ENCODE measurements at regions of chr18 and their contacts with region 1.

Region 1: DNA sequence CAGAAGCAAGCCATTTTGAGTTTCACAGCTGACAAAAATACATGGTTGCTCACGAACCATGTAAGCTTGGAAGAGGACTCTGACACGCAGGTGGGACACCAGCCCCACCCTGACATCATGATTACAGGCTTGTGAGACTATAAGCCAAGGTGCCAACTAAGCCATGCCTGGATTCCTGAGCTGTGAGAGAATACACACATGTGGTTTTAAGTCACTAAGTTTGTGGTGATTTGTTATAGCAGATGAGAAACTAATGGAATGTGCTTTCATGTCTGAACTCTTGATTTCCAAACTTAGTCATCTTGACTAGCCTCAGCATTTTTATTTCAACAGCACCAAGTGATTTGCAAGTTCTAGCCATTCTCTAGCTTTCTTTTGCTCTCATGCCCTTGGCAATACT is 676.1 kb upstream of the CELF4 start:
- DNase-seq: peak; percentile 92
- H3K4me3 ChIP-seq: no peak overlapping the region
- H3K27ac ChIP-seq: peak overlapping the region; percentile 77
- H3K4me1 ChIP-seq: peaks cover 26% of the 10 kb centered on the region
- H3K27me3 ChIP-seq: no peaks in the 10 kb centered on the region
- CTCF ChIP-seq: no peak

Region 2: GRCh38 chr18:38307914-38308313 is 66.2 kb after region 1 on chr18:
- CTCF ChIA-PET with region 1: no interaction called
- dilution Hi-C with region 1: no loop called
- in situ Hi-C with region 1: no loop called
- intact Hi-C with region 1: loop called (anchors 5 kb)
- DNase-seq: no peak
- H3K4me3 ChIP-seq: no peak overlapping the region
- H3K27ac ChIP-seq: no peak overlapping the region
- H3K4me1 ChIP-seq: no peaks in the 10 kb centered on the region
- H3K27me3 ChIP-seq: peaks cover 2% of the 10 kb centered on the region
- CTCF ChIP-seq: no peak

Region 3: GRCh38 chr18:38427232-38427631 is 185.5 kb after region 1 on chr18:
- CTCF ChIA-PET with region 1: no interaction called
- dilution Hi-C with region 1: no loop called
- in situ Hi-C with region 1: no loop called
- intact Hi-C with region 1: no loop called
- DNase-seq: no peak
- H3K4me3 ChIP-seq: no peak overlapping the region
- H3K27ac ChIP-seq: no peak overlapping the region
- H3K4me1 ChIP-seq: no peaks in the 10 kb centered on the region
- H3K27me3 ChIP-seq: no peaks in the 10 kb centered on the region
- CTCF ChIP-seq: peak in 1 of 2 donors; percentile 22

Region 4: DNA sequence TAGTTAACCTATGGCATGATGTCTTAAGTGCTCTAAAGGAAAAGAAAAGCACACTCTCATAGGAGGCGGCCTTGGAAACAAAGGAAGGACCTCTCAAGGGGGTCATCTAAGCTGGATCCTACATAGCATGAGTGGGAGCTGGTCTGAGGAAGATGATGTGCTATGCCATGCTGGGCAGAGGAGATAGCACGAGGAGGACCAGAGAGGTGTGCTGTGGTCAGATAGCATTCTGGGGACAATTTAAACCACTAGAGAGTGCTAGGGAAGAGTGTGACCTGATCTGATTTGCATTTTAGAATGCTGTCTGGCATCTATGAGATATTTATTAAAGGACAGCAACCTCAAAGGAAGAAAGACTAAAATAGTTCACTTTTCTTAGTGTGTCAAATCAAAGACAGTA is 233.9 kb after region 1 on chr18:
- CTCF ChIA-PET with region 1: no interaction called
- dilution Hi-C with region 1: no loop called
- in situ Hi-C with region 1: no loop called
- intact Hi-C with region 1: no loop called
- DNase-seq: no peak
- H3K4me3 ChIP-seq: no peak overlapping the region
- H3K27ac ChIP-seq: no peak overlapping the region
- H3K4me1 ChIP-seq: no peaks in the 10 kb centered on the region
- H3K27me3 ChIP-seq: no peaks in the 10 kb centered on the region
- CTCF ChIP-seq: no peak

Measured in mammary epithelial cell (primary cell).